Ovary (tissue), 10 donors: ENCODE measurements at regions of chr3 and their contacts with region 1.

Region 1: DNA sequence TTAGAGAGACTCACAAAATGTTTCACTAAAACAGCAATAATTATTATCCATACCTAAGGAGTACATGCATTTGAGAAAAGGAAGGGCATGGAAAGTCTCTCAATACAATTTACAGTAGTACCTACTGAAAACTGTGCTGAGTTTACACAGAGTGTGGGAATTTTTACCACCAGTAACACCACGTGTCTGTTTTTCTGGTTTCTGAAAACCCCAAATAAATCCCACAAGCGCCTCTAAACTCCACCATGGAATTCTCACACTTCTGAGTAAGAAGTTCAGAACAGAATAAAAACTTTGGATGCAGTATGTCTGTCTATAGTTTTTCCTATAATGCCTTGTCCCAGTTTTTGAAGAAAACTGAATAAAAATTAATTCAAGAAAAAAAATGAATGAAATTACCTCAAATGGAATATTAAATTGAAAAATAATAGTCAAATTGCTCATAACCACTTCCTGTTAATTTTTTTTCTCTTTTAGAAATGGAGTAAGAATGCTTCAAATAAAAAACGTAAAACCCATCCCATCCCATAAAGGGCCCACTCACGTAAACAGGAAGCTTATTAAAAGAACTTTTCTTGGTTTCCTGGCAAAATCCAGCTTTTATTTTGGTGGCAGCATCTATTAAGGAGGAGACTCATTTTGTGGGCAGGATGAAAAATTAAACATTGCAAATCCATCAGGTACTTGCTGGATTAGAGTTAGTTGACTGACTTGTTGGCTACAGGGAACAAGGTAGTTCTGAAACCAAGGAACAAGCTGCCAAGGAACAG is 378.1 kb downstream of the TIGIT start:
- DNase-seq: no peak
- H3K4me3 ChIP-seq: no peak overlapping the region
- H3K27ac ChIP-seq: no peak overlapping the region
- H3K4me1 ChIP-seq: peaks cover 1% of the 10 kb centered on the region
- H3K27me3 ChIP-seq: no peaks in the 10 kb centered on the region
- CTCF ChIP-seq: no peak
- EP300 ChIP-seq: no peak
- POLR2A ChIP-seq: no peak

Region 2: DNA sequence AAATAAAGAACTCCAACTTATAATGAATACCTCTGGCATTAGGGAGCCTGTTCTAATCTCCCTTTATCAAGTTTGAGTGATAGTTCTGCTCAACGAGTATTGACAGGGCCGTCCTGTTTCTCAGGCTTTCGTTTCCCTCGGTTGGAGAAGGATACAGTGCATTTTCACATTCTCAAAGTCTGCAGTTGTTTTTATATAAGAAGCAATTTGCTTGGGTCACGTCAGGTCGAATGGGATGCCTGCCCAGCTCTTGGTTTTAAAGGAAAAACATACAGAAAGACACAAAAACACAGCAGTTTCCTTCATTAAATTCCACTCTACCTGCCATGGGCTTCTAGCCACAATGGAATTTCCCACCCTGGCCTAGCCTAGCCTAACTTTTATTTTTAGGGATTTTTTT is 11.8 kb before region 1 on chr3:
- intact Hi-C with region 1: no loop called
- DNase-seq: peak; percentile 9 to 43 (median 28)
- H3K4me3 ChIP-seq: peak overlapping the region; percentile 12
- H3K27ac ChIP-seq: no peak overlapping the region
- H3K4me1 ChIP-seq: peaks cover 6% of the 10 kb centered on the region
- H3K27me3 ChIP-seq: no peaks in the 10 kb centered on the region
- CTCF ChIP-seq: no peak
- EP300 ChIP-seq: no peak
- POLR2A ChIP-seq: no peak

Region 3: GRCh38 chr3:114706591-114707232 is 34.8 kb after region 1 on chr3:
- intact Hi-C with region 1: loop called in 1 of 4 experiments (anchors 2 kb)
- DNase-seq: no peak
- H3K4me3 ChIP-seq: no peak overlapping the region
- H3K27ac ChIP-seq: no peak overlapping the region
- H3K4me1 ChIP-seq: peaks cover 5% of the 10 kb centered on the region
- H3K27me3 ChIP-seq: no peaks in the 10 kb centered on the region
- CTCF ChIP-seq: no peak
- EP300 ChIP-seq: no peak
- POLR2A ChIP-seq: no peak